Activated CD4-positive, alpha-beta T cell treated with anti-CD3 and anti-CD28 coated beads, Interleukin-2, amount 10 ng/mL, durations not matched to agents 24 days and 14 days (primary cell): ENCODE measurements at regions of chr12 and their contacts with region 1.

Region 1: DNA sequence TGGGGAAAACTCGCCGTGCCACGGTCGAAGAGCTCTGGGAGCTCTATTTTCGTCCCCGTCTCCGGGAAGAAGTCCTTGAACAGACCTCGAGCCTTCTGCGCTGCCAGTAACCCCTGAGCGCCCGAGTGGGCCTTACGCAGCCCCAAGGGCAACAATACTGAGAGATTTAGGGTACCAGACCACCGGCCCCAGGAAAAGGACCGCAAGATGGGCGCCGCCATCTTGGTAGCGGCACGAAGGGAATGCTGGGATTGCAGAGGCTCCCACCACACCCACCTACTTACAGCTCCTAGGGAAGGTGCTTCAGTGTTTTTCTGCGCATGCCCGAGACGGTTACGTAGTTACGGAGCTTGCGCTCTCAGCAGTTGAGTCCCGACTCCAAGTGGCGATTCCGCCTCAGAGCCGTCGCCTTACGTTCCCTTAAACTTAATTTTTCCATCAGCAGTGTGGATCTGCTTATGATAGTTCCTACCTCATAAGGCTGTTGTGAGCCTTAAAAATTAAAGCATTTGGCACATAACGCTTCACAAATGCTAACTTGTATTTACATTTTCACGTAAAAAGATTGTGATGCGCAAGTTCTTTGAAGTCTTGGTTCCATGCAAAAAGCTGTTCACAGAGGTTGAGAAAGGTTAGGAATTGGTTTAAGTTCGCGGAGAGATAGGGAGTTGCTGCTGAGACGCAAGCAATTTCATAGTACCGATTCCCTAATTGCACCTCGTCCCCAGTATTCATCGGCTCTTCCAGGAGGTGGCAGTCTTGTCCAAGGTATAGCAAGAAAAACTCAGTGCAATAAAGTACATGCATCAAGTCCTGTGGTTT is at the start of gene YARS2:
- DNase-seq: peak; percentile 96
- H3K4me3 Mint-ChIP-seq: peak within 1 kb of the TSS; percentile 93
- H3K27ac Mint-ChIP-seq: peak within 1 kb of the TSS; percentile 93
- H3K4me1 Mint-ChIP-seq: peaks cover 23% of the 10 kb centered on the region
- H3K27me3 Mint-ChIP-seq: no peaks in the 10 kb centered on the region
- total RNA-seq, gene YARS2: 30.5 and 33.0 TPM in 2 replicates

Region 2: DNA sequence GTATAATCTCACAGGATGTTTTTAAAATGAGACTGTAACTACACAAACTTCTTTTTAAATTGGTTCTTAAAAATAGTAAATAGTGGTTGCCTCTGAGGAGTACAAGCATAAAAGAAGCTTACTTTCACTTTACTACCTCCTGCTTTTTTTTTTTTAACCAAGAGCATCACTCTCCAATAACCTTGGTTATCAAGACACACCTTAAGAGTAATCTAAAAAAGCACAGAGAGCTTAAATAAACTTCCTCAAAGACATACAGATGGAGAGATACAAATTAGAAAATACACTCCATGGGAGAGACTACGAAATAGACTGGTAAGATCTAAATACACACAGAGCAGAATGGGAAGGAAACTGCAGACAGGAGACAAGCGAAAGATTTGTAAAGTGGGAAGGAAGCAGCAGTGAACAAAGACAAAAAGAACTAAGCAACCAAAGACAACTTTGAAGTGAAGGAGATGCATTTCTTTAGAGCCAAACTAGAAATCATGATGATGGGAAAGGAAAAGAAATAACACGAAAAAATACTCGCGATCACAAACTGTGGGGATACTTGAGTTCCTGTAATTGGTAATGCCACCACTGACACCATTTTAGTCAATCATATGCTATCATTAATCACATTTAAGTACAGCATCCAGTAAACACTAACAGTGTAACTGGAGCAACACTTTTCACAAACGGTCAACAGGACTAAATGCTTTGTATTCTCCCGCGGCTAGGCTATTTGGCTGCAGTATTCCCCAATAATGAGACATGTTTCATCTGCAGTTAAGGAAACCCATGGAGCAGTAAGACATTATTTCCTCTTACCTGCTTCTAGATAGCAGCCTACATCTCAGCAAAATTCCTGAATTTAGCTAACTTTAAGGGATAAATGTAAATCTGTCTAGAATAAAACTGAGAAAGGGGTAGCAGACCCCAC is 1438.1 kb before region 1 on chr12:
- intact Hi-C with region 1: loop called (anchors 2 kb)
- DNase-seq: peak; percentile 60
- H3K4me3 Mint-ChIP-seq: peak overlapping the region; percentile 97
- H3K27ac Mint-ChIP-seq: peak overlapping the region; percentile 98
- H3K4me1 Mint-ChIP-seq: peaks cover 70% of the 10 kb centered on the region
- H3K27me3 Mint-ChIP-seq: no peaks in the 10 kb centered on the region

Region 3: DNA sequence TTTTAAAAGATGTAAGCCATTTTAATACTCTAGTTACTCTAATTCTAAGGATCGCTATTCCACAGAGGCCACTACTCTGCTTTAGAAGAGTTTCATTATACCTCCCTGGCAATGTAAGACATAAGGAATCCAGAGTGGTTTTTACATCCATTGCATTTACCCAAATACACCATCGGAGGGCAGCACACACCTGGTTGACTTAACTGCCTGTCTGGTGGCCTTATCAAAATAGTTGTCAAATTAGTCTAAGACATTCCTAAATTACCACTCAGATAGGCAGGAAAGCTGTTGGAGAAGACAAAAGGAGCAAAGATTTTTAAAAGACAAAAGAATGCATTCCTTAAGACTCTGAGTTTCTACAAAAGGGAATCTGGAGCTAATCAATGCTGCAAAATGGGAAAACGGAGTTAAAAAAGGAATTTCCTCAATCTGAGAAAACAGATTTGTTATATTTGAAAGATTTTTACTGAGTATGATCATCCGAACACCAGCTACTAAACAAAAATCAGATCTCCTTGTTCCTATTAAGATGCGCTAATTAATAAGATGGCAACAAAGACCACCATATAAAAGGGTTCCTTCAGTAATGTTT is 390.3 kb before region 1 on chr12:
- intact Hi-C with region 1: loop called (anchors 1 kb)
- DNase-seq: peak; percentile 81
- H3K4me3 Mint-ChIP-seq: no peak overlapping the region
- H3K27ac Mint-ChIP-seq: no peak overlapping the region
- H3K4me1 Mint-ChIP-seq: no peaks in the 10 kb centered on the region
- H3K27me3 Mint-ChIP-seq: no peaks in the 10 kb centered on the region

Region 4: GRCh38 chr12:32574585-32574984 is 181.3 kb before region 1 on chr12:
- intact Hi-C with region 1: no loop called
- DNase-seq: no peak
- H3K4me3 Mint-ChIP-seq: no peak overlapping the region
- H3K27ac Mint-ChIP-seq: no peak overlapping the region
- H3K4me1 Mint-ChIP-seq: no peaks in the 10 kb centered on the region
- H3K27me3 Mint-ChIP-seq: peaks cover 5% of the 10 kb centered on the region

Region 5: DNA sequence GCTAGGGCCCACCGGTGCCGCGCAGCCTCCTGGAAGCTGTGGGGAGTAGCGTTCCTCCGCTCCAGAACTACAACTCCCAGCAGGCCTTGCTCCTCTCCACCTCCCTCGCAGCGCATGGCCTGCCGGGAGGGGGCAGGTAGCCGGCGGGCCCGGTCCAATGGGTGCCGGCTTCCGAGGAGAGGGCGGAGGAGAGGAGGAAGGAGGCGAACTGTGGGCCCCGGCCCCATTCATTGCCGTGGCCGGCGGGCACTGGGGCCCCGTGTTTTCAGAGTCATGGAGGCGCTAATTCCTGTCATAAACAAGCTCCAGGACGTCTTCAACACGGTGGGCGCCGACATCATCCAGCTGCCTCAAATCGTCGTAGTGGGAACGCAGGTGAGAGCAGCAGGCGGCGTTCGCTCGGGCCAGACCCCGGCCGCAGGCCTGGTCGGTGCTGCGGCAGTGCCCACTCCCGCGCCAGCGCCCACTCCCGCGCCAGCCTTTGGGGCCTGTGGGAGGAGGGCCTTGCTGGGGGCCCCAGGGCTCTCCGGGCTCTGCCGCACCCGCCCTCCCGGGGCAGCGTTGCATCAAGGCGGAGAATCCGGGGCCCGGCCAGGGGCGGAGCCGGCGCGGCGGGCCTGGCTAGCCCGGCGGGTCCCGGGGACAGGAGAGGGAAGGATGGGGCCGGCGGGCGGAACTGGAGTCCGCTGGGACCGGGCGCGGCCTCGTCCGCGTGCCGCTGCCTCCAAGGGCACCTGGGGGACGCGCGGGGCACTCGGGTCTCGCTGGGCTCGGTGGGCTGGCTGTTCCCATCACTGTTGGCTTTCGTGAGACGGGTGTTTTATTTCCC is 76.6 kb before region 1 on chr12 and contains the start of gene DNM1L:
- intact Hi-C with region 1: loop called (anchors 1 kb)
- DNase-seq: peak; percentile 98
- H3K4me3 Mint-ChIP-seq: peak within 1 kb of the TSS; percentile 88
- H3K27ac Mint-ChIP-seq: peak within 1 kb of the TSS; percentile 93
- H3K4me1 Mint-ChIP-seq: peaks cover 21% of the 10 kb centered on the region
- H3K27me3 Mint-ChIP-seq: no peaks in the 10 kb centered on the region
- total RNA-seq, gene DNM1L: 83.3 and 90.7 TPM in 2 replicates

Region 6: DNA sequence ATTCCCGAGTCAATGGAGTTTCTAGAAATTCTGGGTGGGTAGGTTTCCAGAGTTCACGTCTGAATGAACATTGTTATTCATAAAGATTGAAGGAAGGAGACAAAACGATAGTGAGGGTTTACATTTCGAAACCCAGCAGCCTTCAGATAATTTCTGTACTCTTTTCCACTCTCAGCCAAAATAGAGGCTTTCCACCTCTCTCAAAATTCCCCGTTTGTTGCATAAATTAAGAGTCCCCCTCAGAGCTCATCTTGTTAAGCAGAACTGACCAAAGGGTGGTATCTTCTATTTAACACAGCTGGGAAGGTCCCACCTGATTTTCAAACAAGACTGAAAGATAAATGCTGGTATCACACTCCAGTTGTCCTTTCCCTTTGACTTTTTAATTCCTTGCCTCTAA is 21.3 kb after region 1 on chr12:
- intact Hi-C with region 1: no loop called
- DNase-seq: no peak
- H3K4me3 Mint-ChIP-seq: no peak overlapping the region
- H3K27ac Mint-ChIP-seq: no peak overlapping the region
- H3K4me1 Mint-ChIP-seq: no peaks in the 10 kb centered on the region
- H3K27me3 Mint-ChIP-seq: no peaks in the 10 kb centered on the region

Region 7: GRCh38 chr12:32877601-32878459 is 122.0 kb after region 1 on chr12:
- intact Hi-C with region 1: no loop called
- DNase-seq: no peak
- H3K4me3 Mint-ChIP-seq: no peak overlapping the region
- H3K27ac Mint-ChIP-seq: no peak overlapping the region
- H3K4me1 Mint-ChIP-seq: no peaks in the 10 kb centered on the region
- H3K27me3 Mint-ChIP-seq: no peaks in the 10 kb centered on the region

Region 8: GRCh38 chr12:33690562-33690961 is 934.7 kb after region 1 on chr12:
- intact Hi-C with region 1: no loop called
- DNase-seq: no peak
- H3K4me3 Mint-ChIP-seq: no peak overlapping the region
- H3K27ac Mint-ChIP-seq: no peak overlapping the region
- H3K4me1 Mint-ChIP-seq: no peaks in the 10 kb centered on the region
- H3K27me3 Mint-ChIP-seq: no peaks in the 10 kb centered on the region

Region 9: GRCh38 chr12:34022079-34022830 is 1266.4 kb after region 1 on chr12 and contains the start of gene ALG10:
- intact Hi-C with region 1: loop called (anchors 1 kb)
- DNase-seq: peak; percentile 99
- H3K4me3 Mint-ChIP-seq: peak within 1 kb of the TSS; percentile 95
- H3K27ac Mint-ChIP-seq: peak within 1 kb of the TSS; percentile 98
- H3K4me1 Mint-ChIP-seq: peaks cover 17% of the 10 kb centered on the region
- H3K27me3 Mint-ChIP-seq: no peaks in the 10 kb centered on the region
- total RNA-seq, gene ALG10: 23.8 and 24.1 TPM in 2 replicates